ENCODE measurements at regions of chr16 and their contacts with region 1.

Region 1: GRCh38 chr16:68517606-68518166 is 21.4 kb upstream of the ZFP90 start:
- DNase-seq: no peak
- ATAC-seq: no peak
- H3K4me3 ChIP-seq: no peak overlapping the region
- H3K27ac ChIP-seq: no peak overlapping the region
- H3K4me1 ChIP-seq: peaks cover 0 to 10% (median 4%) of the 10 kb centered on the region in 9 donors
- H3K27me3 ChIP-seq: no peaks in the 10 kb centered on the region
- CTCF ChIP-seq: no peak

Region 2: GRCh38 chr16:68244903-68245853 is 272.5 kb before region 1 on chr16 and contains the start of gene PLA2G15:
- intact Hi-C with region 1: loop called in 2 of 10 experiments (anchors 10 kb)
- DNase-seq: peak; percentile 99
- ATAC-seq: peak; percentile 93 to 98 (median 96)
- H3K4me3 ChIP-seq: peak within 1 kb of the TSS; percentile 77 to 100 (median 87)
- H3K27ac ChIP-seq: peak within 1 kb of the TSS; percentile 8 to 95 (median 86)
- H3K4me1 ChIP-seq: peaks cover 10 to 56% (median 49%) of the 10 kb centered on the region in 9 donors
- H3K27me3 ChIP-seq: no peaks in the 10 kb centered on the region
- CTCF ChIP-seq: peak in 1 of 9 donors; percentile 6
- total RNA-seq, gene PLA2G15: 31.0 to 62.1 (median 44.0) TPM

Region 3: DNA sequence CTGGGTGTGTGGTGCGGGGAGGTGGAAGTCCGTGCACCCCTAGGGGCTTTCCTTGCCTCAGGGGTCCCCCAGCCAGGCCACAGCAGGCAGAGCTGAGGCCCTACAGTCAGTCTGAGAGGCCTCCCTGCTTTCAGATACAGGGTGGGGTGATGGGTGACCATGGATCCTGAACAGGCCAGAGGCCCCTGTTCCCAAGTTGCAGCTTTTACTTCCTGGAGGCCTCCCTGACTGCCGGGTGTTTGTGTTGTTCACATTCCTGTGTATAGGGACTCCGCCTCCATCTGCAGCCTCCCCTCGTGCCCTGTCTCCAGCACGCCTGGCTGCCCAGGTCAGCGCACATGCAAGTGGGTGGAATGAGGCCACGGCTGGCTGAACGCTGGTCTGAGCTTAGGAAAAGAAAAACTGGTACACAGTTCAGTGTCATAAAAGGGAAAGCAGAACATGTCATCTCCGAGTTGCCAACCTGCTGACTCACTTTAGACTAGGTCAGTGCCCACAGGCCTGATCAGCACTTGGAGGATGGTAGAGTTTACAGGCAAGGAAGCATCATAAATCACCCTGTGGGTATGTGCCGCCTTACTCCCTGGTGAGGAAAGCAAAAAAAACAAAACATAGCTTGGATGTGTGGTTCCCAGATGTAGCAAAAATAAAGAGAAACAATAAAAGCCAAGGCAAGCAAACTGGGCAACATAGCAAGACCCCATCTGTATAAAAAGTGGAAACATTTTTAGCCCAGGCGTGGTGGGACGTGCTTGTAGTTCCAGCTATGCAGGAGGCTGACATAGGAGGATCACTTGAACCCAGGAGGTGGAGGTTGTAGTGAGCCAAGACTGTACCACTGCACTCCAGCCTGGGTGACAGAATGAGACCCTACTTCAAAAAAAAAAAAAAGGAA is 259.5 kb before region 1 on chr16:
- intact Hi-C with region 1: loop called in 1 of 10 experiments (anchors 10 kb)
- DNase-seq: no peak
- ATAC-seq: peak; percentile 21 to 71 (median 41)
- H3K4me3 ChIP-seq: no peak overlapping the region
- H3K27ac ChIP-seq: peak overlapping the region; percentile 43 to 80 (median 71)
- H3K4me1 ChIP-seq: peaks cover 5 to 85% (median 32%) of the 10 kb centered on the region in 9 donors
- H3K27me3 ChIP-seq: no peaks in the 10 kb centered on the region
- CTCF ChIP-seq: no peak

Region 4: GRCh38 chr16:68356249-68356918 is 161.3 kb before region 1 on chr16:
- intact Hi-C with region 1: no loop called
- DNase-seq: no peak
- ATAC-seq: peak in 5 of 8 donors; percentile 11 to 42 (median 26)
- H3K4me3 ChIP-seq: peak overlapping the region in 1 of 10 donors; percentile 12
- H3K27ac ChIP-seq: peak overlapping the region in 1 of 10 donors; percentile 31
- H3K4me1 ChIP-seq: peaks cover 0 to 18% (median 0%) of the 10 kb centered on the region in 9 donors
- H3K27me3 ChIP-seq: no peaks in the 10 kb centered on the region
- CTCF ChIP-seq: no peak